IMR-90 (cell line): ENCODE measurements at regions of chr12 and their contacts with region 1.

Region 1: DNA sequence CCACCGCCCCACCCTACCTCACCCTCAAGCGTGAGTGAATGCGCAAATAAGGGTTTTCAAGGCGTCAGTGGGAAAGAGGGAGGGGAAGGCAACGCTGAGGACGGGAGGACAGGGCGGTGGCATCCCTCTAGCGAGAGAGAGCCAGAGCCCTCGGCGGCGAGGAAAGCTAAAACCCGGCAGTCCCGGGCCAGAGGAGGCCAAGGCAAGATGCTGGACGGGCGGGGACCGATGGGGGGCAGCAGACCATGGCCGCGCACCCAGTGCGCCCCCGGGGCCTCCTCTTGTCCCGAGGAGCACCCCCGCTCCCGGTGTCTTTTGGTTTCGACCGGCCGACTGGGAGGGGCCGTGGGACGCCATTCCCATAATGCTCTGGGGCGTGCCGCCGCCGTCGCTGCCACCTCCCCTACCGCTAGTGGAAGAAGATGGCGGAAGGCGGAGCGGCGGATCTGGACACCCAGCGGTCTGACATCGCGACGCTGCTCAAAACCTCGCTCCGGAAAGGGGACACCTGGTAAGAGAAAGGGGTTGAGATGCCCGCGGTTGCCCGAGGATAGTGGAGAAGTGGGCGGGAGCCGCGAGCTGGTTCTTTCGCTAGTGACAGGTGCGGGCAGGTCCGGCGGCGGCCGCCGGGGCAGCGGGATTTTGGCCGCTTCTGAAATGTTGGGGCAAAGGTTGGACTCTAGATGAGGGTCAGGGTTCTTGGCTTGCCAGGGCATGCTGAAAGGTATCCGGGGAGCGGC is at the start of gene USP15:
- DNase-seq: peak; percentile 97
- ATAC-seq: peak; percentile 96
- H3K4me3 ChIP-seq: peak within 1 kb of the TSS; percentile 75
- H3K27ac ChIP-seq: peak within 1 kb of the TSS; percentile 92
- H3K4me1 ChIP-seq: no peaks in the 10 kb centered on the region; the same call in 1 of the 2 replicates
- H3K27me3 ChIP-seq: no peaks in the 10 kb centered on the region
- CTCF ChIP-seq: peak; percentile 90
- POLR2A ChIP-seq: peak; percentile 88
- RAD21 ChIP-seq: no peak
- total RNA-seq, gene USP15: 49.6 and 82.5 TPM in 2 replicates

Region 2: DNA sequence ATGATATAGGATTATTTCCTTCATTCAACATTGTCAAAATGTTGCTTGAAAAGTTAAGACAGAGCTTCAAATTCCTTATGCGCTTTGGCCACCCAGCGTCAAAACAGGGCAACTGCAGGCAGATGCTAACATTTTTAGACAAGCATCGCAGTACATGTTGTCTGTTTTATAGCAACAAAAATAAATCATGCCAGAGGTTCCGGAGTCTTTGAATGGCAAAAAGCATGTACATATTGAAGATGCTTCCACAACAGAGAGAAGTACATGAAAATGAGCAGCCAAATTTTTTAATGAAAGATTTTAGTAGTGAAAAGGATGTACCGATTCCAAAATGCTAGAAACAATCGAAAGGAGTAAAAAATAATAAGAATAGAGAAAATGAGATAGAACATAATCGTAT is 49.7 kb before region 1 on chr12:
- CTCF ChIA-PET with region 1: no interaction called
- POLR2A ChIA-PET with region 1: no interaction called
- dilution Hi-C with region 1: no loop called
- in situ Hi-C with region 1: no loop called
- intact Hi-C with region 1: no loop called
- DNase-seq: peak; percentile 52
- ATAC-seq: peak; percentile 75
- H3K4me3 ChIP-seq: no peak overlapping the region
- H3K27ac ChIP-seq: no peak overlapping the region
- H3K4me1 ChIP-seq: no peaks in the 10 kb centered on the region
- H3K27me3 ChIP-seq: no peaks in the 10 kb centered on the region
- CTCF ChIP-seq: peak; percentile 69
- POLR2A ChIP-seq: no peak
- RAD21 ChIP-seq: peak; percentile 34; the same call in 1 of the 2 replicates

Region 3: GRCh38 chr12:62279058-62279457 is 18.9 kb after region 1 on chr12:
- CTCF ChIA-PET with region 1: no interaction called
- POLR2A ChIA-PET with region 1: no interaction called
- dilution Hi-C with region 1: no loop called
- in situ Hi-C with region 1: no loop called
- intact Hi-C with region 1: no loop called
- DNase-seq: no peak
- ATAC-seq: no peak
- H3K4me3 ChIP-seq: no peak overlapping the region
- H3K27ac ChIP-seq: no peak overlapping the region
- H3K4me1 ChIP-seq: peaks cover under 1% of the 10 kb centered on the region; the same call in 1 of the 2 replicates
- H3K27me3 ChIP-seq: no peaks in the 10 kb centered on the region
- CTCF ChIP-seq: no peak
- POLR2A ChIP-seq: no peak
- RAD21 ChIP-seq: no peak

Region 4: GRCh38 chr12:62396750-62397149 is 136.6 kb after region 1 on chr12:
- CTCF ChIA-PET with region 1: no interaction called
- POLR2A ChIA-PET with region 1: no interaction called
- dilution Hi-C with region 1: no loop called
- in situ Hi-C with region 1: no loop called
- intact Hi-C with region 1: loop called (anchors 10 kb)
- DNase-seq: peak; percentile 74
- ATAC-seq: peak; percentile 88
- H3K4me3 ChIP-seq: no peak overlapping the region
- H3K27ac ChIP-seq: no peak overlapping the region
- H3K4me1 ChIP-seq: no peaks in the 10 kb centered on the region
- H3K27me3 ChIP-seq: no peaks in the 10 kb centered on the region
- CTCF ChIP-seq: no peak
- POLR2A ChIP-seq: no peak
- RAD21 ChIP-seq: no peak

Region 5: DNA sequence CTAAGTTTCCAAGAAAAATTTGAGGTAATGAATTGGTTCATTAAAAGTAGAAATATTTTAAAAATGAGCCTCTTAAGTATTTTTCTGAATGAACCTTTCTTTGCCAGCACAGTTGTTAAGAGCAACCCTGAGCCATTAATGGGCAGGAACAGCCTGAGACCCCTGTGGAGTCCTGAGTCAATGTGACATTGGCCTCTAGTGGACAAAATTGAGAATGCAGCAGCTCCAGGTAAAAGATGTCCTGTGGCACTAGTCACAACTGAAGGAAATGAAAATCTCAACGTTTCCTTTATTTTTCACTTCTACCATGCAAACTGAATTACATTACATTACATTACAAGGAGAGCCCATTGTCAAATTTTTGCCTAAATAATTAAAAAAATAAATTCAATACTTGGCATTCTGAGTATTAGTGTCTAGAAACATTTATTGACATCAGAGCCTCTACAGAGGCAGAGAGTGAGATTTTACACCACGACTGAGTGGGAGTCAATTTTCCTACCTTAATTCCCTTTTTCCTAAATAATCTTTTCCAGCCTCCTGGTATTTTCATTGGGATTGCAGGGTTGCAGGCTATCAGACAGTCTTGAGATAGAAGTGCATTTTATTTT is 539.1 kb after region 1 on chr12:
- CTCF ChIA-PET with region 1: interaction called, 3 read pairs
- POLR2A ChIA-PET with region 1: no interaction called
- dilution Hi-C with region 1: no loop called
- in situ Hi-C with region 1: loop called (anchors 10 kb)
- intact Hi-C with region 1: loop called (anchors 10 kb)
- DNase-seq: peak; percentile 72
- ATAC-seq: peak; percentile 94
- H3K4me3 ChIP-seq: no peak overlapping the region
- H3K27ac ChIP-seq: no peak overlapping the region
- H3K4me1 ChIP-seq: no peaks in the 10 kb centered on the region
- H3K27me3 ChIP-seq: no peaks in the 10 kb centered on the region
- CTCF ChIP-seq: peak; percentile 93
- POLR2A ChIP-seq: no peak
- RAD21 ChIP-seq: peak; percentile 95